ENCODE measurements at regions of chr3 and their contacts with region 1.

Region 1: DNA sequence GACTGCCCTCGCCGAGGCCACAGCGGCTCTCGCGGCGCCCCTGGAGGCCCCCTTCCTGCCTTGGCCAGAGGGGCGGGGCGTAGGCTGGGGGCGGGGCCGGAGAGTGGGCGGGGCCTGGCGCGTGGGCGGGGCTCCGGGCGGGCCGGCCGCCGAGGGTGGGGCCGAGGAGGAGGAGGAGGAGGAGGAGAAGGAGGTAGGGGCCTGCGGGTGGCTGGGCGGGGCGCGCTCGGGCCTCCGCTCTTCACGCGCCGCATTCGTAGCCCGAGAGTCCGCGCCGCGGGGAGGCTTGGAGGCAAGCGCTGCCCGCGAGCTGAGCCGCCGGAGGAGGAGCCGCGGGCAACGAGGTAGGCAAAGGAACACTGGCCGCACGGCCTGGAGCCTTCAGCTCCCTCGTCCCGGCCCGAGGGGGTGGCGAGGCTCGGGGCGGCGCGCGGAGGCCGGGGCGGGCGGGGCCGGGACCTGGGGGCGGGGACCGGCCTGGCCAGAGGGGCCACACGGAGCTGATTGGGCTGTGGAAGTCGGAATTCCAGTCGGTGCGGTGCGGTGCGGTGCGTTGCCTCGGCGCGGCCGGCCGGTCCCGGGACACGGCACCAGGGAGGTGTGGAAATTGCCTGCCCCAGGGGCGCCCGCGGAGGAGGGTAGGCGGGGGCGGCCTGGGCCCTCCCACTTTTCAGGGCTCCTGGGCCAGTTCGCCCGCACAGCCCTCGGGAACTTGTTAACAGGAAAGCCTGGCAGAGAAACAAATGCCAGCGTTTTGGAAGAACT is at the start of gene PPP2R3A:
- DNase-seq: peak; percentile 97
- H3K4me3 ChIP-seq: peak within 1 kb of the TSS; percentile 70 to 86 (median 78)
- H3K27ac ChIP-seq: peak within 1 kb of the TSS; percentile 95 to 97 (median 96)
- H3K4me1 ChIP-seq: peaks cover 20 to 54% (median 50%) of the 10 kb centered on the region in 4 donors
- H3K27me3 ChIP-seq: no peaks in the 10 kb centered on the region
- CTCF ChIP-seq: no peak
- EP300 ChIP-seq: no peak
- POLR2A ChIP-seq: peak; percentile 23
- total RNA-seq, gene PPP2R3A: 19.4 to 28.9 (median 26.3) TPM

Region 2: DNA sequence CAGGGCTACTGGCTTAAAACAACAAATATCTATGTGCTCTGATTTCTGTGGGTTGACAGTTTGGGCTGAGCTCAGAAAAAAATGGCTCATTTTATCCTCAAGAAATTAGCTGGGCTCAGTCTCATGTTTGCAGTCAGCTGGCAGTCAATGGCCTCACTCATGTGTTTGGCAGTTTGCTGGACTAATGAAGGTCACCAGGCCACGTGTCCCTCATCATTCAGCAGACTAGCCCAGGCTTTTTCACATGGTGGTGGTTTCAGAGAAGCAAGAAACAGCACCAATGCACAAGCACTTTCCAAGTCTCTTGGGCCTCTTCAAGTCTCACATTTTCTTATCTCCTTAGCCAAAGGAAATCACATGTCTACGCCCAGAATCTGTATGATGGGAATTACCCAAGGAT is 478.4 kb before region 1 on chr3:
- intact Hi-C with region 1: no loop called
- DNase-seq: no peak
- H3K4me3 ChIP-seq: no peak overlapping the region
- H3K27ac ChIP-seq: no peak overlapping the region
- H3K4me1 ChIP-seq: no peaks in the 10 kb centered on the region
- H3K27me3 ChIP-seq: peaks cover 0 to 13% (median 0%) of the 10 kb centered on the region in 4 donors
- CTCF ChIP-seq: no peak
- EP300 ChIP-seq: no peak
- POLR2A ChIP-seq: no peak

Region 3: DNA sequence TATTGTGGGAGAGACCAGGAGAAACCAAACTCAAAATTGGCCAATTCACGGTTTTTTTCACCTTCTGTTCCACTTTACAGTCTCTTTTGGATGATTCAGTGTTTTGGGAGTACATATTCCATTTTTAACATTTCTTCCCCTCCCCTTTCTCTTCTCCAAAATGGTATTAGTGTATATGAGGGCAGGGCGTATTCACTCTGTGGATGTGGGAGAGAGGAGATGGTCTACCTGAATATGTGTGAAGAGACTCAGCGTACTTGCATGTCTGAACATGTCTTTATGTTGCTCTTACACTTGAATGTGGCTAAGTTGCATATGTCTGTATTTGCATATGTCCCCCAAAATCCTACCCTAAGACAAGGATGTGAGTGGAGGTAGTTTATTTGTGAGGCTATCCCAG is 291.2 kb before region 1 on chr3:
- intact Hi-C with region 1: no loop called
- DNase-seq: no peak
- H3K4me3 ChIP-seq: no peak overlapping the region
- H3K27ac ChIP-seq: no peak overlapping the region
- H3K4me1 ChIP-seq: no peaks in the 10 kb centered on the region
- H3K27me3 ChIP-seq: no peaks in the 10 kb centered on the region
- CTCF ChIP-seq: no peak
- EP300 ChIP-seq: no peak
- POLR2A ChIP-seq: no peak

Region 4: DNA sequence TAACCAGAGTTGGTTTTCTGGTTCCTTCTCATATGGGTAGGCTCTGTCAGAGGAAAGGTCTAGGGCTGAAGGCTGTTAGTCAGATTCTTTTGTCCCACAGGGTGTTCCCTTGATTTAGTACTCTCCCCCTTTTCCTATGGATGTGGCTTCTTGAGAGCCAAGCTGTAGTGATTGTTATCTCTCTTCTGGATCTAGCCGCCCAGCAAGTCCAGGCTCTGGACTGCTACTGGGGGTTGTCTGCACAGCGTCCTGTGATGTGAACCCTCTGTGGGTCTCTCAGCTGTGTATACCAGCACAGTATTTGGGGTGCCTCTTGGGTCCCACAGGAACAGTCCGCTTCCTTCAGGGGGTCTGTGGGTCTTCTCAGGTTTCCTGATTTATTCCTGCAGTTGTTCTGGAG is 70.6 kb after region 1 on chr3:
- intact Hi-C with region 1: loop called (anchors 5 kb)
- DNase-seq: no peak
- H3K4me3 ChIP-seq: no peak overlapping the region
- H3K27ac ChIP-seq: no peak overlapping the region
- H3K4me1 ChIP-seq: peaks cover 0 to 12% (median 0%) of the 10 kb centered on the region in 4 donors
- H3K27me3 ChIP-seq: no peaks in the 10 kb centered on the region
- CTCF ChIP-seq: no peak
- EP300 ChIP-seq: no peak
- POLR2A ChIP-seq: no peak

Measured in esophagus muscularis mucosa (tissue), 4 donors.